Transverse colon (tissue), 4 donors: ENCODE measurements at regions of chr1 and their contacts with region 1.

Region 1: DNA sequence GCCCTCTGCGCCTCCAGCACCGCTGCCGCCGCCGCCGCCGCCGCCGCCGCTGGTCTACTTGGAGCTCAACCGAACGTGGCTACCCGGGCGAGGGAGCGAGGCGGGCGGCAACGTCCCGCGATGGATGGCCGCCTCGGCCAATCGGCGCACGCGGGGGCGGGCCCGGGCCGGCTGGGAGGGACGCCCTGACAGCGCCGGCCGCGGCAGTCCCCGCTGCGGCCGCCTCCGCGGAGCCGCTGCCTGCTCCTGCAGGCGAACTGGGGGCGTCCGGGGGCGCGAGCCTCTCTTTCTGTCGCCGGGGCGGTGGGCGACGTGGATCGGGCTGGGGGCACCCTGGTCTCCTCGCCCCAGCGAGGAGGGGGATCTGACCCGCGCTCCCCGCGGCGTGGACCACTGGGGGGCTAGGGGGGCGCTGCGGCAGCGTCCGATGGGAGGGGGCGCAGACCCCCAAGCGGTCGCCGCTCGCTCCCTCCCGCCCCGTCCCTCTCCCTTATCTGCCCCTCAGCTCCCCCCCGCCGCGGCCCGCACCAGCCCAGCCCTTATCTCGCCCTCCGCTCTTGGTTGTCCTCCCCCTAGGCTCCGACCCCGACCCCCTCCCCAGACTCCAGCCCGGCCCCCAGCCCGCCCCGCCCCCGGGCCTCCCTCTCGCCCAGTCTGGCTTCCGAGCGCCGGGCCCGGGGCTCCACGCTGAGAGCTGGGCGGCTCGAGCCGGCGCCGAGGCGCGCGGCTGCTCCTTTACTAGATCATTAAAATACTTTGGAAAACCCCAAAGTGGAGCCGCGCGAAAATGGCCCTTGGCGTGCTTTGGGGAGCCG is at the start of gene SSBP3:
- DNase-seq: peak; percentile 95
- H3K4me3 ChIP-seq: peak within 1 kb of the TSS; percentile 93 to 99 (median 98)
- H3K27ac ChIP-seq: peak within 1 kb of the TSS; percentile 99 to 100 (median 99)
- H3K4me1 ChIP-seq: peaks cover 25 to 55% (median 50%) of the 10 kb centered on the region in 4 donors
- H3K27me3 ChIP-seq: no peaks in the 10 kb centered on the region
- CTCF ChIP-seq: peak in 1 of 5 experiments; percentile 31
- EP300 ChIP-seq: no peak
- POLR2A ChIP-seq: peak; percentile 69
- total RNA-seq, gene SSBP3: 28.7 to 162 (median 37.0) TPM

Region 2: GRCh38 chr1:54121482-54122134 is 284.9 kb before region 1 on chr1:
- in situ Hi-C with region 1: no loop called
- intact Hi-C with region 1: loop called (anchors 5 kb)
- DNase-seq: peak; percentile 85
- H3K4me3 ChIP-seq: peak overlapping the region in 3 of 4 donors; percentile 10 to 34 (median 23)
- H3K27ac ChIP-seq: no peak overlapping the region
- H3K4me1 ChIP-seq: peaks cover 5 to 29% (median 13%) of the 10 kb centered on the region in 4 donors
- H3K27me3 ChIP-seq: no peaks in the 10 kb centered on the region
- CTCF ChIP-seq: peak; percentile 67 to 80 (median 76)
- EP300 ChIP-seq: no peak
- POLR2A ChIP-seq: no peak

Region 3: DNA sequence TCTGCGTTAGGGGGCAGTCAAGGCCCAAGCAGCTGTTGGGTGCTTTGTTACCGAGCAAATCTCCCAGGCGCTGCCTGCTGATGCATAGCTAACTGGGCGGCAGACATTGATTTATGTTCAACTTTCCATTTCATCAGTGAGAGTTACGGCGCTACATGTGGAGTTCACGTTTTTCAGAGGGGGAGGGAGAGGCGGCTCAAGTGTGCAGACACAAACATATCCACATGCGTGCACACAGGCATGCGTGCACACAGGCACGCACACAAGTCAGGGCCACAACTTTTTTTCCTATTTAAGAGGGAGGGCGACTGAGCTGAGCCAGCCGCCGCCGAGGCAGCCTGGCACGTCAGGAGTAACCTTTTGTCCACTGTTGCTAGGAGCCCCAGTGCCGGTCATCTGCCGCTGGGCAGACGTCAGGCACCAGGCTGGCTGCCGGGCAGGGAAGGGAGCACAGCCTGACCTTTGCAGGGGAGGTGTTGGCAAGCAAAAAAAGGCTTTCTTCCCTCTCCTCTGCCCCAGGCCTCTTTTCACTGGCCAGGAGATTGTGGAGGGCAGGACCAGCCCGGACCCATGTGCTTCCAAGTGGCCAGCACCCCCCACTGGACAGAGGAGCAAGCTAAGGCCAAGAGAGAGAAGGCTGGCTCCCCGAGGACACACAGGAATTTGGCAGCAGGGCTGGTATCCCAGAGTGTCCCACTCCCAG is 133.3 kb before region 1 on chr1:
- in situ Hi-C with region 1: no loop called
- intact Hi-C with region 1: loop called (anchors 2 kb)
- DNase-seq: peak; percentile 61
- H3K4me3 ChIP-seq: no peak overlapping the region
- H3K27ac ChIP-seq: peak overlapping the region; percentile 88 to 94 (median 89)
- H3K4me1 ChIP-seq: peaks cover 50 to 79% (median 59%) of the 10 kb centered on the region in 4 donors
- H3K27me3 ChIP-seq: no peaks in the 10 kb centered on the region
- CTCF ChIP-seq: peak; percentile 30 to 42 (median 38)
- EP300 ChIP-seq: peak; percentile 31
- POLR2A ChIP-seq: no peak

Region 4: DNA sequence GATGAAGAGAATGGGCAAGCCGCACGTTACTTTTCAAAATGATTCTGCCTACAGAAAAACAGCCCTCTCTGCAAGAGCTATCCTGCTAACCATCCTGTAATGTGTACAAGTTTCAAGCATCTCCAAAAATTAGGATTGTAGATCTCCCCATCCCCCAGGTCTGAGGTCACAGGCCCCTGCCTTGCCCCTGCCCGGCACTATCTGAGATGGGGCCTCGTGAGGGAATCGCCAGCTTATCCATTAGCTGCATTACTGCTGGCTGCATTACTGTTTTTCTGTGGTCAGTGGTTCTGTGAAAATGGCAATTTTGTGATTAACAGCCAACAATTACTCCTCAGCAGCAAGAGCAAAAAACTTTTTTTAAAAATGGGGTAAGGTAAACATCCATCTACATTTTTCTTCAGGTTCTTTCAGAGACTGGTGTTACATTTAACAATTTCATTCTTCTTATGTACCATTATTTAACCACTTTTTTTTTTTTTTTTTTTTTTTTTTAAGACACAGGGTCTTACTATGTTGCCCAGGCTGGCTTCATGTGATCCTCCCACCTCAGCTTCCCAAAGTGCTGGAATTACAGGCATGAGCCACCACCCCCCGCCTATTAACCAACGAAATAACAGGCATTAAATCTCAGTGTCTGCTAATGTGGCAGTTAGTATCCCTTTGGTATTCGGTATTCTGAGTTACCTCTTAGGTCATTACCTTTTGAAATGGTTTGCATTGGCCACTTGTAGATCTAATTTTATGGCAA is 122.7 kb before region 1 on chr1:
- in situ Hi-C with region 1: no loop called
- intact Hi-C with region 1: no loop called
- DNase-seq: no peak
- H3K4me3 ChIP-seq: no peak overlapping the region
- H3K27ac ChIP-seq: no peak overlapping the region
- H3K4me1 ChIP-seq: peaks cover 42 to 64% (median 44%) of the 10 kb centered on the region in 4 donors
- H3K27me3 ChIP-seq: no peaks in the 10 kb centered on the region
- CTCF ChIP-seq: no peak
- EP300 ChIP-seq: no peak
- POLR2A ChIP-seq: no peak

Region 5: GRCh38 chr1:54323324-54323739 is 83.2 kb before region 1 on chr1:
- in situ Hi-C with region 1: no loop called
- intact Hi-C with region 1: loop called (anchors 10 kb)
- DNase-seq: peak; percentile 38
- H3K4me3 ChIP-seq: no peak overlapping the region
- H3K27ac ChIP-seq: peak overlapping the region; percentile 69 to 88 (median 78)
- H3K4me1 ChIP-seq: peaks cover 38 to 58% (median 50%) of the 10 kb centered on the region in 4 donors
- H3K27me3 ChIP-seq: no peaks in the 10 kb centered on the region
- CTCF ChIP-seq: peak in 3 of 5 experiments; percentile 13 to 20 (median 13)
- EP300 ChIP-seq: no peak
- POLR2A ChIP-seq: no peak